ENCODE measurements at regions of chr10 and their contacts with region 1.

Region 1: GRCh38 chr10:68955832-68956532 is at the start of gene DDX21:
- DNase-seq: peak; percentile 79
- ATAC-seq: peak; percentile 82
- H3K4me3 Mint-ChIP-seq: peak within 1 kb of the TSS; percentile 100
- H3K27ac Mint-ChIP-seq: peak within 1 kb of the TSS; percentile 100
- H3K4me1 Mint-ChIP-seq: peaks cover 41% of the 10 kb centered on the region
- H3K27me3 Mint-ChIP-seq: no peaks in the 10 kb centered on the region
- CTCF ChIP-seq: no peak
- total RNA-seq, gene DDX21: 111 and 112 TPM in 2 replicates

Region 2: GRCh38 chr10:68720793-68721672 is 234.9 kb before region 1 on chr10 and contains the start of gene CCAR1:
- CTCF ChIA-PET with region 1: no interaction called
- POLR2A ChIA-PET with region 1: interaction called, 5 read pairs
- intact Hi-C with region 1: loop called (anchors 2 kb)
- DNase-seq: peak; percentile 93
- ATAC-seq: peak; percentile 98
- H3K4me3 Mint-ChIP-seq: peak within 1 kb of the TSS; percentile 92
- H3K27ac Mint-ChIP-seq: peak within 1 kb of the TSS; percentile 98
- H3K4me1 Mint-ChIP-seq: peaks cover 14% of the 10 kb centered on the region
- H3K27me3 Mint-ChIP-seq: no peaks in the 10 kb centered on the region
- CTCF ChIP-seq: no peak
- total RNA-seq, gene CCAR1: 88.2 and 98.8 TPM in 2 replicates

Region 3: GRCh38 chr10:68988530-68989316 is 32.7 kb after region 1 on chr10 and contains the start of gene KIFBP:
- CTCF ChIA-PET with region 1: no interaction called
- POLR2A ChIA-PET with region 1: interaction called, 9 read pairs
- intact Hi-C with region 1: loop called (anchors 1 kb)
- DNase-seq: peak; percentile 58
- ATAC-seq: peak; percentile 87
- H3K4me3 Mint-ChIP-seq: peak within 1 kb of the TSS; percentile 97
- H3K27ac Mint-ChIP-seq: peak within 1 kb of the TSS; percentile 88
- H3K4me1 Mint-ChIP-seq: peaks cover 40% of the 10 kb centered on the region
- H3K27me3 Mint-ChIP-seq: no peaks in the 10 kb centered on the region
- CTCF ChIP-seq: no peak
- total RNA-seq, gene KIFBP: 6.5 and 7.7 TPM in 2 replicates

Region 4: DNA sequence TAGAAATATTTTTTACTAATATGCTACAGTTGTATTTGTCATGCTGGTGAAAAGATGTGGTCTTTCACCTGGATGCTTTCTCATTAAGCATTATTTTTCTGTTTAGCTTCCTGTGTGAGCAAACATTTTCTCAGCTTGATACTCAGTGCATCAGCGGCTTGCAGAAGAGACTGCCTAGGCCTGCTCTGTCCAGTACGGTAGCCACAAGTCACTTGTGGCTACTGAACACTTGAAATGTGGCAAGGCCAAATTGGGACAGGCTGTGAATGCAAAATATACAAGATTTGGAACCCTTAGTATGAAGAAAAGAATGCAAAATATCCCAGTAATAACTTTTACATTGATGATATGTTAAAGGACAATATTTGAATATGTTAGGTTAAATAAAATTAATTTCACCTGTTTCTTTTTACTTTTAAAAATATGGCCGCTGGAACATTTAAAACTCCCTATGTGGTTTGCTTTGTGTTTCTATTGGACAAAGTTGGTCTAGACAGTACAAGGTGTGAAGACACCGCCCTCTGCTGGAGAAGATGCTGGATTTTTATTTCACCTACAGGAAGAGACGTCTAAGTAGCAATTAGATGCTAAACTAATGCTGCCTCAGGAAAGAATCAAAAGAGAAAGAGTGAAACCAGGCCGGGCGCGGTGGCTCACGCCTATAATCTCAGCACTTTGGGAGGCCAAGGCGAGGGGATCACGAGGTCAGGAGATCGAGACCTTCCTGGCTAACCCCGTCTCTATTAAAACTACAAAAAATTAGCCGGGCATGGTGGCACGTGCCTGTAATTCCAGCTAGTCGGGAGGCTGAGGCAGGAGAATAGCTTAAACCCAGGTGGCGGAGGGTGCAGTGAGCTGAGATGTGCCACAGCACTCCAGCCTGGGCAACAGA is 137.2 kb after region 1 on chr10:
- CTCF ChIA-PET with region 1: interaction called, 24 read pairs
- POLR2A ChIA-PET with region 1: interaction called, 19 read pairs
- intact Hi-C with region 1: loop called (anchors 1 kb)
- DNase-seq: peak; percentile 27
- ATAC-seq: peak; percentile 59
- H3K4me3 Mint-ChIP-seq: no peak overlapping the region
- H3K27ac Mint-ChIP-seq: peak overlapping the region; percentile 8
- H3K4me1 Mint-ChIP-seq: peaks cover 45% of the 10 kb centered on the region
- H3K27me3 Mint-ChIP-seq: no peaks in the 10 kb centered on the region
- CTCF ChIP-seq: peak; percentile 34

Region 5: GRCh38 chr10:69318106-69318866 is 362.3 kb after region 1 on chr10:
- CTCF ChIA-PET with region 1: no interaction called
- POLR2A ChIA-PET with region 1: no interaction called
- intact Hi-C with region 1: loop called (anchors 2 kb)
- DNase-seq: peak; percentile 87
- ATAC-seq: peak; percentile 93
- H3K4me3 Mint-ChIP-seq: peak overlapping the region; percentile 92
- H3K27ac Mint-ChIP-seq: peak overlapping the region; percentile 82
- H3K4me1 Mint-ChIP-seq: peaks cover 40% of the 10 kb centered on the region
- H3K27me3 Mint-ChIP-seq: no peaks in the 10 kb centered on the region
- CTCF ChIP-seq: no peak

Measured in activated B cell treated with CpG ODN at 0.5 μM for 24 hours (primary cell).